MCF 10A (cell line): ENCODE measurements at regions of chr3 and their contacts with region 1.

Region 1: GRCh38 chr3:45760878-45761711 is 35.2 kb downstream of the SLC6A20 start:
- DNase-seq: peak; percentile 62
- H3K4me3 Mint-ChIP-seq: no peak overlapping the region
- H3K27ac Mint-ChIP-seq: no peak overlapping the region
- H3K4me1 Mint-ChIP-seq: peaks cover 6% of the 10 kb centered on the region
- H3K27me3 Mint-ChIP-seq: no peaks in the 10 kb centered on the region
- CTCF ChIP-seq: peak; percentile 75

Region 2: GRCh38 chr3:45507820-45508317 is 253.2 kb before region 1 on chr3:
- CTCF ChIA-PET with region 1: interaction called, 4 read pairs
- POLR2A ChIA-PET with region 1: no interaction called
- intact Hi-C with region 1: loop called (anchors 1 kb)
- DNase-seq: no peak
- H3K4me3 Mint-ChIP-seq: no peak overlapping the region
- H3K27ac Mint-ChIP-seq: no peak overlapping the region
- H3K4me1 Mint-ChIP-seq: no peaks in the 10 kb centered on the region
- H3K27me3 Mint-ChIP-seq: no peaks in the 10 kb centered on the region
- CTCF ChIP-seq: no peak

Region 3: DNA sequence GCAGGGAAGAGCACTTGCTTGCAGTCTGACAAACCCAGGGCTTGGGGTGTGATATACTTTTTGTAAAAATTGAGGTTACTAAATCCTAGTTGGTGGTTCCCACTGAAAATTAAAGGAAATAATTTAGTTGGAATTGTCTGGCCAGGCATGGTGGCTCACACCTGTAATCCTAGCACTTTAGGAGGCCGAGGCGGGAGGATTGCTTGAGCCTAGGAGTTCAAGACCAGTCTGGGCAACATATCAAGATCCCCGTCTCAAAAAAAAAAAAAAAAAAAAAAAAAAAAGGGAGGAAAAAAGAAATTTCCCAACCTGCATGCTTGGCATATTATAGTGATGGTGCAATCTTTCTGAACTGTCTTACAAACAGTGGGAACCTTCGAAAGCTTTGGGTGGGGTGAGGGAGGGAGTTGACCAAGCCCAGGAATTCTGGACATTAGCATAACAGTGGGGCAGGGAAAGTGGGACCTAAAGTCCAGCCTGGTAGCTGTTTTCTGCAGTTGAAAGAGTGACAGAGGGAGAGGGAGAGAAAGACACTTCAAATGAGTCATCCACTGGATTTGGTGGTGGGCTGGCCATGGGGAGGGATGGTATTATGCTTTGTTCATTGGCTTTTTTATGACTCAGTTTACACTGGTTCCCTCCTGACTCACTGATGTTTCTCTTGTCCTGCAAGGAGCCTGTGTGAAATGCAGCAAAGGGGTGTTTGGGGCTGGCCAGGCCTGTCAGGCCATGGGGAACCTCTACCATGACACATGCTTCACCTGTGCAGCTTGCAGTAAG is 125.4 kb before region 1 on chr3:
- CTCF ChIA-PET with region 1: no interaction called
- POLR2A ChIA-PET with region 1: no interaction called
- intact Hi-C with region 1: no loop called
- DNase-seq: peak; percentile 85
- H3K4me3 Mint-ChIP-seq: peak overlapping the region; percentile 1
- H3K27ac Mint-ChIP-seq: peak overlapping the region; percentile 54
- H3K4me1 Mint-ChIP-seq: peaks cover 24% of the 10 kb centered on the region
- H3K27me3 Mint-ChIP-seq: no peaks in the 10 kb centered on the region
- CTCF ChIP-seq: no peak

Region 4: DNA sequence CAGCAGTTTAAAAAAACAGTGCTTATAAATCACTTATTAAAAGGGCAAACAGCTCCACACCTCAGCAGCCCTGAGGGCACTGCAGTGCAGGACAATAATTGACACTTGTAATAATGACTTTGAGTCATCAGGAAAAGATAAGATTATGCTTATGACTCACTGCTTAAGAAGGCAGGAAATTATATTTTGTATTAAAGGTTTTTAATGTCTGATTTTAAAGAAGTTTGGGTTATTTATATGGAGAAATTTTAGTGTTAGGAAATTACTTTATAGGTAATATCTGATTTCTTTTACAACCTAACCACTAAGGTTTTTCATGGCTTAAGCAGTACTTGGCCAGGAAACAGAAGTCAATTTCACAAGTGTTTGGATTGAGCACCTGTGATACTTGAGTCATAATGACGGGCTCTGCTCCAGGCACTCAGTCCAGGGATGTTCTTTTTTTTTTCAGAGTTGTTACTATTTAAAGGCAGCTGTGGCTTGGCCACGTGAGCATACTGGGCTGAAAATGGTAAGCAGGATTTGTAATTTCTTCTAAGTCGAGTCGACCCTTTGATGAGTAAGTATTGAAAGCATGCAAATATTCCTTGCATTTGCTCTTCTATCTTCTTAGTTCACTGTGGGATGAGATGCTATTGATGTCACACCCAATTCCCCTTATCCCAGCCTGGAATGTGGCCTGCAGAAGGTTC is 56.9 kb after region 1 on chr3:
- CTCF ChIA-PET with region 1: interaction called, 18 read pairs
- POLR2A ChIA-PET with region 1: interaction called, 3 read pairs
- intact Hi-C with region 1: loop called (anchors 5 kb)
- DNase-seq: peak; percentile 97
- H3K4me3 Mint-ChIP-seq: no peak overlapping the region
- H3K27ac Mint-ChIP-seq: peak overlapping the region; percentile 73
- H3K4me1 Mint-ChIP-seq: peaks cover 28% of the 10 kb centered on the region
- H3K27me3 Mint-ChIP-seq: no peaks in the 10 kb centered on the region
- CTCF ChIP-seq: no peak

Region 5: DNA sequence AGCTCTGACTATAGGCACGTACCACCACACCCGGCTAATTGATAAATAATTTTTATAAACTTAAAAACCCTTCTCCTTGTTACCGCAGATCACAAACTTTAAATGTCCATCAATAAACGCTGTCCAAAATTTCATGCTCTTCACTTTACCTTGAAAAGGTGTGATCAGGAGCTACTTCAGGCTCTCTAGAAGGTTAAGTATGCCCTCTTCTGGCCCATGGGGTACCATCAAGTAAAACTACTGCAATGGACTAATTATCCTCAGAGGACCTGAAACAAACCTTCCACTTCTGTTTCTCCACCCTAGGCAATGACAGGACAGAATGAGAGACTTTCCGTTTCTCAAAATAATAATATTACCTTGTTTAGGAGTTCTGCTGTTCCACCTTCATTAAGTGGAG is 71.6 kb after region 1 on chr3:
- CTCF ChIA-PET with region 1: interaction called, 92 read pairs
- POLR2A ChIA-PET with region 1: interaction called, 4 read pairs
- intact Hi-C with region 1: loop called (anchors 1 kb)
- DNase-seq: peak; percentile 51
- H3K4me3 Mint-ChIP-seq: no peak overlapping the region
- H3K27ac Mint-ChIP-seq: no peak overlapping the region
- H3K4me1 Mint-ChIP-seq: no peaks in the 10 kb centered on the region
- H3K27me3 Mint-ChIP-seq: no peaks in the 10 kb centered on the region
- CTCF ChIP-seq: peak; percentile 22

Region 6: DNA sequence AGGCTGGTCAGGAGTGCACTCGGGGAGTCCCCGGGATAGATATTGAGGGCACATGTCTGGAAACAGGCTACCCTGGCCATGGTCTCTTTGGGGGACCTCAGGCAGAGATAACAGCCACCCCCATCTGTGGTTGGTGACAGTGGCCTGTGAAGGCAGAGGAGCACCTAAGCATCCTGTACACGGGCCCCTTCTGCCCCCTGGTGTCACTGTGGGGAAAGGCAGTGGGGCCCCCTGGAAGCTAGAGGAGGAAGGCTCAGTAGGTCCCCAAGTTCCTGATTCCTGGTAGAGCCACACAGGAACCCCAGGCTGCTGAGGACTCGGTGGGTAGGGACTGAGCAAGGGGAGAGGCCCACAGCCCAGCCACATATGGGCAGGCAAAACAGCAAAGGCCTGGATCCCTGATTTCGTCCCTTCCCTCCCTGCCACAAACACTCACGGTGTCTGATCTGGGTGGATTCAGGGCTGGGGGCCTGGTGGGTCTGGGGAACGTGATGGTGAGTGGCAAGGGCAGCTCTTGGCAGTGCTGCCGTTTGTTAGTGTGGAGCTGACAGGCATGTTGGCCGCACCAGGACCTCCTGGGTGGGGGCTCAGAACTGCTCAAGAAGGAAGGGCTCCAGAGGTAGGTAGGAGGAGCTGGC is 168.1 kb after region 1 on chr3:
- CTCF ChIA-PET with region 1: interaction called, 14 read pairs
- POLR2A ChIA-PET with region 1: no interaction called
- intact Hi-C with region 1: loop called (anchors 1 kb)
- DNase-seq: peak; percentile 51
- H3K4me3 Mint-ChIP-seq: no peak overlapping the region
- H3K27ac Mint-ChIP-seq: no peak overlapping the region
- H3K4me1 Mint-ChIP-seq: no peaks in the 10 kb centered on the region
- H3K27me3 Mint-ChIP-seq: no peaks in the 10 kb centered on the region
- CTCF ChIP-seq: peak; percentile 61